ENCODE measurements at regions of chr10 and their contacts with region 1.

Region 1: DNA sequence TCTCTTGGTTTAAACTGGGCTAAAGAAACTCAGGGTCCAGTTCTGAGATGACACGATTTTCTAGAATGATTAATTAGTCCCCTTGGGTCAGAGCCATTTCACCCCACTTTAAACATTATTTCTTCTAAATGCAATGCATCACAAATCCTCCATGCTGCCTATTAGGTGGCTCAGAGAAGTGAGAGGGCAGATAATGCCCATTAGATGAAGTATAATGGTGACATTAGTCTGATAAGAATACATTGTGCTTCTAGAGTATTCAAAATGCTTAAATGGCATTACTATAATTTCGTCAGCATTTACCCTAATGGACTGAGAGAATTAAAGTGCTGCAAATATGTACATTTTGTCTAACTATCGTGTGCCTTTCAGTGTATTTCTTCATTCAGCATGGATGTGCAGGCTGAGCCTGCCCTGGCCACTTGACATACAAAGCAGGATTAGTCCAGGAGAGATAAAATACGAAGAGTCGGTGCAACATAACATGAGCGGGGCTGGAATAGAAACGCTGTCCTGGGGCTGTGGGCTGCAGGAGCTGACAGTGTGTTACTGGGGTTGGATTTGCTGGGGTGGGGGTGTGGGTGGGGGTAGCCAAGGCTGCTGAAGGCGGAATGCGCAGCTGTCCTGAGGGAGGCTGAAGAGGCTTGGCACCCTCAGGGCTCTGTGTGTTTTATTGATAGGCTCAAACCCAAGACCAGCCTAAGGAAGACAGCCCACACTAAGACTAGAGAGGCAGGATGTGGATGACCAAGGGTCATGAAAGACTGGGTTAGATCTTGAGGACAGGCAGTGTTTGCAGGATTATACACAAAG is 52.8 kb upstream of the KLF6 start:
- DNase-seq: no peak
- ATAC-seq: no peak
- H3K4me3 ChIP-seq: no peak overlapping the region
- H3K27ac ChIP-seq: no peak overlapping the region
- H3K4me1 ChIP-seq: peaks cover 0 to 2% of the 10 kb centered on the region in 2 donors
- H3K27me3 ChIP-seq: no peaks in the 10 kb centered on the region
- CTCF ChIP-seq: no peak
- POLR2A ChIP-seq: no peak

Region 2: DNA sequence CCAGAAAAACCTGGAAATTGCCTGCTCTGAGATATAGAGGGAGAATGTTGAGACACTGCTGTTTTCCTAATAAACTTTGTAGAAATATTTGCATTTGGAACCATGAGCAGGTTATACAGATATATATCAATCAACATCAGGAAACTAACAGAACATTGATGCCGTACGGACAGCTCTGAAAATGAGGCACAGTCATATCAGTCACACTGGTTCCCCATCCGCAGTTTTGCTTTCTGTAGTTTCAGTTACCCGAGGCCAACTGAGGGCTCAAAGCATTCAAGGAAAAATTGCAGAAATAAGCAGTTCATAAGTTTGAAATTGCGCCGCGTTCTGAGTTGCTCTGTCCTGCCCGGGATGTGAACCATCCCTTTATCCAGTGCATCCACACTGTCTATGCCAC is 190.8 kb before region 1 on chr10:
- in situ Hi-C with region 1: no loop called
- intact Hi-C with region 1: no loop called
- DNase-seq: no peak
- ATAC-seq: no peak
- H3K4me3 ChIP-seq: no peak overlapping the region
- H3K27ac ChIP-seq: no peak overlapping the region
- H3K4me1 ChIP-seq: no peaks in the 10 kb centered on the region
- H3K27me3 ChIP-seq: no peaks in the 10 kb centered on the region
- CTCF ChIP-seq: no peak
- POLR2A ChIP-seq: no peak

Region 3: DNA sequence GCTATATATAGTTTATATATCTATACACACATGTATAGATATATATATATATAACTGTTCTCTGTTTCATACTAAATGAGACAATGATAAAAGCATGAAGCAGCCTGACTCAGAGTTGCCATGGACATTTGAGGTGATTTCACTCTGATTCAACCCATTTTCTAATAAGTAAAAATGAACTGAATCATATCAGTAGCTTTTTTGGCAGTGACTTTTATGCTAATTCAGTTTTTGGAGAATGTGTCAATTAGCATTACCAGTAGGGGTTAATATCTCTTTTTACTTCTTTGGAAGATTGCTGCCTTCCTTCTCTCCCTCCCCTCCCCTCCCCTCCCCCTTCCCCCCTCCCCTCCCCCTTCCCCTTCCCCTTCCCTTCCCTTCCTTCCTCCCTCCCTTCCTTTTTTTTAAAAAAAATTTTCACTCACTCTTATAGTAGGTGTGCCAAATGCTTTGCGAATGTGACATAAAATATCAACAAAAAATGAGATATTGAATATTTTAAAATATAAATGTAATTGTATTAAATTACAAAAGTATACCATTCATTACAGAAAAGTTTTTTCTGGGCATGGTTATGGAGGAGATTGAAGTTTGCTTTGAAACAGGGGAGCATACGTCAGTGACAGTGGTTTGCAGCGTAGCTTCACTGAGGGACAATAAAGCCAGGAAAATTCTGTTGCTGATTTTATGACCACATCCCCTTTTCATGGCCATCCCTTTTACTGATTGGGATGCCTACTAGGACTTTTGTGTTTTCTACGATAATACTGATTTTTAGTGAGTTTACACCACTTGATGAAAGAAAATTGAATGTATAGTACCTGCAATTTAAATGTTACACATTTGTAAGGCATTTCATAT is 11.2 kb after region 1 on chr10:
- in situ Hi-C with region 1: no loop called
- intact Hi-C with region 1: loop called (anchors 1 kb)
- DNase-seq: no peak
- ATAC-seq: no peak
- H3K4me3 ChIP-seq: no peak overlapping the region
- H3K27ac ChIP-seq: no peak overlapping the region
- H3K4me1 ChIP-seq: peaks cover 22 to 24% of the 10 kb centered on the region in 2 donors
- H3K27me3 ChIP-seq: no peaks in the 10 kb centered on the region
- CTCF ChIP-seq: no peak
- POLR2A ChIP-seq: no peak